ENCODE measurements at regions of chr12 and their contacts with region 1.

Region 1: DNA sequence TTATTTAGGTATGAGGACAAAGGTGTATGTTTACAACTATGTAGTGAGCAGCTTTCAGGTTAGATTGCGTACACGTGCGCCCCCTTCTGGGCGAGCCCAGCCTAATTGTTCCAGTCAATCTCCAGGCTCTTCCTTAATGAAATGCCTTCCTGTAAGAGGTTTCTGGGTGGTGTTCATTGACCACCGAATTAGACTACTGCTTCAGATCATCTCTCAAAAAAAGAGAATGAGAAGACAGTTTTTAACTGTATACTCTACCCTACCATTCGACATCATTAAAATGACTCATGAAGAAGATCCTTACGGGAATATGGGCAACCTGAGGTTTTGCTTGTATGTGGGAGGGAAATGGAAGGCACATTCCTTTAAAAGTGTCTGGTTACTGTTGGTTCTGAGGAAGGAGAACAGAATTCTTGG is 2.1 kb downstream of the LUM start:
- DNase-seq: peak; percentile 90
- ATAC-seq: peak; percentile 87

Region 2: GRCh38 chr12:92108651-92109050 is 999.5 kb after region 1 on chr12:
- intact Hi-C with region 1: loop called (anchors 5 kb)
- DNase-seq: no peak
- ATAC-seq: peak; percentile 78

Measured in sciatic nerve (tissue), 2 donors.